ENCODE measurements at regions of chr11 and their contacts with region 1.

Region 1: GRCh38 chr11:100827934-100828661 is 141.0 kb downstream of the ARHGAP42 start:
- DNase-seq: peak; percentile 82 to 85
- H3K4me3 ChIP-seq: no peak overlapping the region
- H3K4me3 Mint-ChIP-seq: no peak overlapping the region
- H3K27ac Mint-ChIP-seq: peak overlapping the region; percentile 73
- H3K4me1 ChIP-seq: peaks cover 36% of the 10 kb centered on the region
- H3K4me1 Mint-ChIP-seq: peaks cover 29% of the 10 kb centered on the region
- H3K27me3 ChIP-seq: no peaks in the 10 kb centered on the region
- H3K27me3 Mint-ChIP-seq: no peaks in the 10 kb centered on the region
- CTCF ChIP-seq: peak; percentile 79 to 90

Region 2: DNA sequence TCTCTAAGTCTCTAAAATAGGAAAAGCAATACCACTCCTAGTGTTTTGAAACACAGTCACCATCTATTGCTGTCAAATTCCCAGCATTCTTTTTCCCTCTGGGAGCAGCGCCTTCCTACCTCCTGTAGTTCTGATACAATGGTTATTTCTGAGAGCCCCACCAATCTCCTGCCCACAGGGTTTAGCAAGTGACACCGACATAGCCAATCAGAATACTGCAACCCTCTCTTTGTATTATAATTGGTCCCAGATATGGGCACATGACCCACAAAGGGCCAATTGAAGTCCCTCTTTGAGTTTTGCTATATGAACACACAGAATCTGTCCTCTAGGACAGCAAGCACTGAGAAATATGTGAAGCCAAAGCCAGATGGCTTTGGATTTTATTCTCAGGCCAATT is 158.0 kb before region 1 on chr11:
- CTCF ChIA-PET with region 1: no interaction called
- POLR2A ChIA-PET with region 1: no interaction called
- intact Hi-C with region 1: no loop called
- DNase-seq: no peak
- H3K4me3 ChIP-seq: no peak overlapping the region
- H3K4me3 Mint-ChIP-seq: no peak overlapping the region
- H3K27ac Mint-ChIP-seq: no peak overlapping the region
- H3K4me1 ChIP-seq: no peaks in the 10 kb centered on the region
- H3K4me1 Mint-ChIP-seq: no peaks in the 10 kb centered on the region
- H3K27me3 ChIP-seq: no peaks in the 10 kb centered on the region
- H3K27me3 Mint-ChIP-seq: peaks cover 2% of the 10 kb centered on the region
- CTCF ChIP-seq: no peak

Region 3: DNA sequence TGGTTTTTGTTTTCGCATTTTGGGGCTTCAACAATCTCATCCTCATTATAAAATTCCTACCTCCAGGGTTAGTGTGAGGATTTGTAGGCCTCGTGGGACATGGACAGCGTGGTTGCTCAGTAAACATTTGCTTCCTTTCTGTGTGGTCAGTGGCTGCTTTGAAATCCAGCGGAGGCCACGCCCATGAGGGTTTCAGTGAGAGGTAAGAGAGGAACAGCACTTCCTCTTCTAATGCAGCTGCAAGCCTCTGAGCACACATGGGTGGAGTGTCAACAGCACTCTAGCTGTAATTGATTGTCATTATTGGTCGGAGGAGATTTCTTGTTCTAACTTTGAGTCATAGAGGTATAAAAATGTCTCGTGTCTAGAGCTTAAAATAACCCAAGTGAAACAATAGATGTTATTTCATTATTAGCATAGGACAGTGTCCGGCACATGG is 147.0 kb before region 1 on chr11:
- CTCF ChIA-PET with region 1: interaction called, 45 read pairs
- POLR2A ChIA-PET with region 1: no interaction called
- intact Hi-C with region 1: loop called (anchors 1 kb)
- DNase-seq: peak; percentile 81 to 86
- H3K4me3 ChIP-seq: no peak overlapping the region
- H3K4me3 Mint-ChIP-seq: peak overlapping the region; percentile 34
- H3K27ac Mint-ChIP-seq: peak overlapping the region; percentile 71
- H3K4me1 ChIP-seq: no peaks in the 10 kb centered on the region; the same call in 1 of the 2 replicates
- H3K4me1 Mint-ChIP-seq: peaks cover 13% of the 10 kb centered on the region
- H3K27me3 ChIP-seq: no peaks in the 10 kb centered on the region
- H3K27me3 Mint-ChIP-seq: no peaks in the 10 kb centered on the region
- CTCF ChIP-seq: no peak

Region 4: DNA sequence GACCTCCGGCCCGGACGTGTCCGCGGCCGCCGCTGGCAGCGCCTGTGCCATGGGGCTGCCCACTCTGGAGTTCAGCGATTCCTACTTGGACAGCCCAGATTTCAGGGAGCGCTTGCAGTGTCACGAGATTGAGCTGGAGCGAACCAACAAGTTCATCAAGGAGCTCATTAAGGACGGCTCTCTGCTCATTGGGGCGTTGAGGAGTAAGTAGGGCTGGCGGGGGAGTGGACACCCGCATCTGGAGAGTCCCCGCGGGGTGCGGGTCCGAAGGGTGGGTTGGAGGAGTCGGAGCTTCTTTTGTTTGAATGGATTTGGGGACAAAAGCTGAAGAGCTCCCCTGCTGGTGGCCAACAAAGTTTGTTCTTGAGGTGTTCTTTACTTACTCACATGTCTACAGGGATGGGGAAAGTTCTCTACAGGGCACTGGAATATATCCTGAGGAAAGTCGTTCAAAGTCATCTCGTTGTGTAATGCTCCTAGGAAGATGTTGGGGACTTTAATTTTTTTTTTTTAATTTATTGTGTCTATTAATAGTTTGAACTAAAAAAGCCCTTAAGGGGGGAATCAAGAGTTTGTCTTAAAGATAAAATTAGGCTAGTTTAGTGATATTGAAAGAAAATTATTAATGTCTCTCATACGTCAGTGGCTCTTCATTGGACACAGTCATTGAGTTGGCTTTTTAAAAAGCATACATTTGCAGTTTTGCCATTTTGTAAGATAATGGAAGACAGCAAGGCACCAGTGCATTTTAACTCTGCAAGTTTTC is 140.3 kb before region 1 on chr11:
- CTCF ChIA-PET with region 1: interaction called, 45 read pairs
- POLR2A ChIA-PET with region 1: interaction called, 4 read pairs
- intact Hi-C with region 1: loop called (anchors 1 kb)
- DNase-seq: peak; percentile 78
- H3K4me3 ChIP-seq: peak overlapping the region; percentile 85
- H3K4me3 Mint-ChIP-seq: peak overlapping the region; percentile 100
- H3K27ac Mint-ChIP-seq: peak overlapping the region; percentile 89
- H3K4me1 ChIP-seq: peaks cover 9% of the 10 kb centered on the region
- H3K4me1 Mint-ChIP-seq: peaks cover 21% of the 10 kb centered on the region
- H3K27me3 ChIP-seq: no peaks in the 10 kb centered on the region
- H3K27me3 Mint-ChIP-seq: no peaks in the 10 kb centered on the region
- CTCF ChIP-seq: peak; percentile 92

Region 5: DNA sequence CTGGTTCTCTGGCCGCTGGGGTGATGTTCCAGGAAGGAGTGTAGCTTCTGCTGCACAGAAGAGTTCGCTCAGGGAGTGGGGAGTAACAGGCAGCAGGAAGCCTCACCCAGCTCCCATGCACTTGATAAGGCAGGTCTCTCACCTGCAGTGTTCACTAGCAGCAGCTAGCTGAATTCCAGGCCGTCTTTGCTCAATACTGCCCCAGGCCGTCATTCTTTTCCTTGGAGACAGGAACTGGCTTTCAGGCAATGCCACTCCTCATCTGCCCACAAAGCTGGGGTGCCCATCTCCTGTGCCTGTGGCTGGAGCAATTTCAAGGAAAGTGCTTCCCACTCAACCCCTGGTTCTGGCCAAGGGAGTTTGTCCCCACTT is 74.9 kb before region 1 on chr11:
- CTCF ChIA-PET with region 1: interaction called, 13 read pairs
- POLR2A ChIA-PET with region 1: no interaction called
- intact Hi-C with region 1: loop called (anchors 1 kb)
- DNase-seq: peak; percentile 85 to 89
- H3K4me3 ChIP-seq: no peak overlapping the region
- H3K4me3 Mint-ChIP-seq: no peak overlapping the region
- H3K27ac Mint-ChIP-seq: peak overlapping the region; percentile 81
- H3K4me1 ChIP-seq: peaks cover 33% of the 10 kb centered on the region
- H3K4me1 Mint-ChIP-seq: peaks cover 16% of the 10 kb centered on the region
- H3K27me3 ChIP-seq: no peaks in the 10 kb centered on the region
- H3K27me3 Mint-ChIP-seq: no peaks in the 10 kb centered on the region
- CTCF ChIP-seq: peak in 1 of 2 experiments; percentile 35

Region 6: GRCh38 chr11:100808904-100809491 is 19.1 kb before region 1 on chr11:
- CTCF ChIA-PET with region 1: interaction called, 4 read pairs
- POLR2A ChIA-PET with region 1: no interaction called
- intact Hi-C with region 1: loop called (anchors 1 kb)
- DNase-seq: peak; percentile 32 to 53
- H3K4me3 ChIP-seq: no peak overlapping the region
- H3K4me3 Mint-ChIP-seq: no peak overlapping the region
- H3K27ac Mint-ChIP-seq: peak overlapping the region; percentile 45
- H3K4me1 ChIP-seq: peaks cover 35% of the 10 kb centered on the region
- H3K4me1 Mint-ChIP-seq: peaks cover 21% of the 10 kb centered on the region
- H3K27me3 ChIP-seq: no peaks in the 10 kb centered on the region
- H3K27me3 Mint-ChIP-seq: no peaks in the 10 kb centered on the region
- CTCF ChIP-seq: no peak

Region 7: GRCh38 chr11:100849009-100849900 is 21.2 kb after region 1 on chr11:
- CTCF ChIA-PET with region 1: interaction called, 25 read pairs
- POLR2A ChIA-PET with region 1: no interaction called
- intact Hi-C with region 1: loop called (anchors 1 kb)
- DNase-seq: peak in 1 of 2 experiments; percentile 54
- H3K4me3 ChIP-seq: no peak overlapping the region
- H3K4me3 Mint-ChIP-seq: peak overlapping the region; percentile 27
- H3K27ac Mint-ChIP-seq: peak overlapping the region; percentile 30
- H3K4me1 ChIP-seq: peaks cover 46% of the 10 kb centered on the region
- H3K4me1 Mint-ChIP-seq: peaks cover 50% of the 10 kb centered on the region
- H3K27me3 ChIP-seq: no peaks in the 10 kb centered on the region
- H3K27me3 Mint-ChIP-seq: no peaks in the 10 kb centered on the region
- CTCF ChIP-seq: no peak

Region 8: DNA sequence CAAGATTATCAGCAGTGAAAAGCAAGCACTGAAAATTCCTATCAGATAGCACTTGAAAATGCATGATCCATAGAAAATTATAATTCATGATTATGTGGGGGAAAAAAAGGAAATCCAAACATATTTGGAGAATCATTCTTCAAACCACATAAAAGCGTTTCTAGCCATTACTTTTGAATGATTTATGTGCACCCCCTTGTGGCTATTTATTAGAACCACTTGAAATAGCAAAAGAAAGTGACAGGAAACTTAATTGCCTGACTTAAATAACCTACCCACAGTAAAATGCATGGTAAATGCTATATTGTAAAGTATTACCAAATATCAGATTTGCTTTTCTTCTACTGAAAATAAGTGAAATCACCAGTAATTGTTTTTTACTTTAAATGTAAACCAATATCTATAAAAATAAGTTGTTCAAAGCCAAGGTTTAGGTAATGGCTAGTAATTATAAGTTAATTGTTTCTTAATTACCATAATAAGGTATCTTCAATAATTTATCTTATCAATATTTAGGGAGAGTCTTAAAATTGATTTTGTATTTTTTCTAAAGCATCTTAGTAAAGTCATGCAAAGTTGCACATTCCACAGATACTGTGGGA is 27.5 kb after region 1 on chr11:
- CTCF ChIA-PET with region 1: interaction called, 6 read pairs
- POLR2A ChIA-PET with region 1: no interaction called
- intact Hi-C with region 1: loop called (anchors 1 kb)
- DNase-seq: peak in 1 of 2 experiments; percentile 65
- H3K4me3 ChIP-seq: no peak overlapping the region
- H3K4me3 Mint-ChIP-seq: no peak overlapping the region
- H3K27ac Mint-ChIP-seq: no peak overlapping the region
- H3K4me1 ChIP-seq: peaks cover 32% of the 10 kb centered on the region
- H3K4me1 Mint-ChIP-seq: peaks cover 27% of the 10 kb centered on the region
- H3K27me3 ChIP-seq: no peaks in the 10 kb centered on the region
- H3K27me3 Mint-ChIP-seq: no peaks in the 10 kb centered on the region
- CTCF ChIP-seq: peak; percentile 64 to 81